B cell (primary cell): ENCODE measurements at regions of chr1 and their contacts with region 1.

Region 1: GRCh38 chr1:32221980-32222755 is at the starts of genes EIF3I and TMEM234:
- DNase-seq: peak; percentile 94
- ATAC-seq: peak; percentile 86
- H3K4me3 ChIP-seq: peak within 1 kb of the TSS; percentile 61 to 99 (median 93)
- H3K4me3 Mint-ChIP-seq: peak within 1 kb of the TSS; percentile 97
- H3K27ac ChIP-seq: peak within 1 kb of the TSS; percentile 72 to 94
- H3K27ac Mint-ChIP-seq: peak within 1 kb of the TSS; percentile 98
- H3K4me1 ChIP-seq: peaks cover 28 to 30% of the 10 kb centered on the region in 2 donors
- H3K4me1 Mint-ChIP-seq: peaks cover 43% of the 10 kb centered on the region
- H3K27me3 ChIP-seq: no peaks in the 10 kb centered on the region
- H3K27me3 Mint-ChIP-seq: no peaks in the 10 kb centered on the region
- CTCF ChIP-seq: no peak
- total RNA-seq, gene EIF3I: 87.0 and 91.0 TPM in 2 replicates
- total RNA-seq, gene TMEM234: 50.4 and 60.8 TPM in 2 replicates

Region 2: DNA sequence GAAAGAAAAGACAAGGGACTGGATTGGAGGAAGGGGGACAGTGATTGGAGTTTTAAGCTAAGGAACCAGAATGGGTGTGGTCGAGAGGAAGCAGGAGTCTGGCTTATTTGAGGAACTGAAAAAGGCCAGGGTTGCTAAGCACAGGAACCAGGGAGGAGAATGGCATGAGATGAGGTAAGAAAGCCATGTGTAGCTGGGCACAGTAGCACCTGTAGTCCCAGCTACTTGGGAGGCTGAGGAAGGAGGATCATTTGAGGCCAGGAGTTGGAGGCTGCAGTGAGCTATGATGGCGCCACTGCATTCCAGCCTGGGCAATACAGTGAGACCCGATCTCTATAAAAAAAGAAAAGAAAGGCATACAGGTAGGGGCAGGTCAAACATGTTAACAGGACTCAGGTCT is 216.6 kb before region 1 on chr1:
- CTCF ChIA-PET with region 1: no interaction called
- POLR2A ChIA-PET with region 1: no interaction called
- intact Hi-C with region 1: no loop called
- DNase-seq: peak; percentile 48
- ATAC-seq: peak; percentile 56
- H3K4me3 ChIP-seq: no peak overlapping the region
- H3K4me3 Mint-ChIP-seq: peak overlapping the region; percentile 0
- H3K27ac ChIP-seq: no peak overlapping the region
- H3K27ac Mint-ChIP-seq: peak overlapping the region; percentile 73
- H3K4me1 ChIP-seq: peaks cover 12 to 21% of the 10 kb centered on the region in 2 donors
- H3K4me1 Mint-ChIP-seq: peaks cover 22% of the 10 kb centered on the region
- H3K27me3 ChIP-seq: no peaks in the 10 kb centered on the region
- H3K27me3 Mint-ChIP-seq: no peaks in the 10 kb centered on the region
- CTCF ChIP-seq: no peak

Region 3: DNA sequence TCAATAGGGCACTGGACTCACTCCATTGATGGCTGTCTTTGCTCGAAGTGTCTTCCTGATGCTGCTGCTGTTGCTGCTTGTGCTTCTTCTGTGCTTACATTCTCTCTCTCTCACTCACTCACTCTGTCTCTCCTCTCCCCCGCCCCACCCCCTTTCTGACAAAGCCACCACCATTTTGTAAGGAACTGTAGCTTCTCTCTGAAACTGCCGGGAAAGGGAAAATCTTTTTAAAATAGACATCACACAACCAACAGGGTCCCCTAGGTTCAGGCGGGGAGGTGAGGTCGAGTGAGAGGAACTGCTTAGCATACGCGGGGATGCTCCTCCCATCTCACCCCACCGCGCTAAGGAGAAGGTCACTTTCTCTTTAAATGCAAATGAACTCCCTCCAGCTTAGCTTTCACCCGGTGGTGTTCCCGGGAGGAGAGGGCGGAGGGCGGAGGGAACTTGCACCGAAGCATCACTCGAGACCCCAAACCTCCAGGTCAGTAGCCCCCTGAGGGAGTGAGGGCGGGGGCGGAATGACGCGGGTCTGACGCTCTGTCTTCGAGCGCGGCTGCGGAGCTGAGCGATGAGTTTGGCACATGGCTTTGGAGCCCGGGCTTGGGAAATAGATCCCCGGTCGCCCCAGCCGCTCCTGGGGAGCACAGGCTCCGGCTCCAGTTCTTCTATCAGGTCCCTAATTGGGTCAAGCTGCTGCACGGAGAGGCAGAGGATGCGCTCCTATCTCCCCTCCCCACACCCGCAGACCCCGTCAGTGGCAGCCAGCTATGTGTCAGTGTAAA is 21.8 kb before region 1 on chr1 and contains the start of gene CCDC28B:
- CTCF ChIA-PET with region 1: interaction called, 4 read pairs
- POLR2A ChIA-PET with region 1: interaction called, 4 read pairs
- intact Hi-C with region 1: loop called (anchors 1 kb)
- DNase-seq: peak; percentile 77
- ATAC-seq: peak; percentile 58
- H3K4me3 ChIP-seq: peak within 1 kb of the TSS; percentile 48 to 85 (median 79)
- H3K4me3 Mint-ChIP-seq: peak within 1 kb of the TSS; percentile 88
- H3K27ac ChIP-seq: peak within 1 kb of the TSS; percentile 78 to 88
- H3K27ac Mint-ChIP-seq: peak within 1 kb of the TSS; percentile 86
- H3K4me1 ChIP-seq: peaks cover 17 to 36% of the 10 kb centered on the region in 2 donors
- H3K4me1 Mint-ChIP-seq: peaks cover 33% of the 10 kb centered on the region
- H3K27me3 ChIP-seq: no peaks in the 10 kb centered on the region
- H3K27me3 Mint-ChIP-seq: no peaks in the 10 kb centered on the region
- CTCF ChIP-seq: no peak
- total RNA-seq, gene CCDC28B: 7.8 and 10.2 TPM in 2 replicates